PC-9 (cell line): ENCODE measurements at regions of chr1 and their contacts with region 1.

Region 1: DNA sequence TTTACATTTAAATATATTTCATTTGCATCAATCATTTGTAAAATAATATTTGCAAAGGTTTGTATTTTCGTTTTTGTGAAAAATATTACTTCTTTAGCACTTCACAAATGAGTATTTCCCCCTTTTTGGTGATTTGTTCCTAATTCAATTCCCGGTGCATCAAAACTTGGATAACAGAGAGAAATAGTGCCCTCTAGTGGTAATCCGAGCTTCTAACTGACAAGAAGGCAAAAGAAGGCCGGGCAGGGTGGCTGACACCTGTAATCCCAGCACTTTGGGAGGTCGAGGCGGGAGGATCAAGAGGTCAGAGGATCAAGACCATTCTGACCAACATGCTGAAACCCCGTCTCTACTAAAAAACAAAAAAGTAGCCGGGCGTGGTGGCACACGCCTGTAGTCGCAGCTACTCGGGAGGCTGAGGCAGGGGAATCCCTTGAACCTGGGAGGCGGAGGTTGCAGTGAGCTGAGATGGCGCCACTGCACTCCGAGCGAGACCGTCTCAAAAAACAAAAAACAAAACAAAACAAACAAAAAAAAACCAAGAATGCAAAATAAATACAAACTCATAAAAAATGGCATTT is 137.7 kb downstream of the COL11A1 start:
- DNase-seq: peak; percentile 11 to 62
- H3K4me3 ChIP-seq: no peak overlapping the region
- H3K27ac ChIP-seq: no peak overlapping the region
- H3K4me1 ChIP-seq: no peaks in the 10 kb centered on the region
- H3K27me3 ChIP-seq: no peaks in the 10 kb centered on the region
- CTCF ChIP-seq: peak; percentile 97

Region 2: DNA sequence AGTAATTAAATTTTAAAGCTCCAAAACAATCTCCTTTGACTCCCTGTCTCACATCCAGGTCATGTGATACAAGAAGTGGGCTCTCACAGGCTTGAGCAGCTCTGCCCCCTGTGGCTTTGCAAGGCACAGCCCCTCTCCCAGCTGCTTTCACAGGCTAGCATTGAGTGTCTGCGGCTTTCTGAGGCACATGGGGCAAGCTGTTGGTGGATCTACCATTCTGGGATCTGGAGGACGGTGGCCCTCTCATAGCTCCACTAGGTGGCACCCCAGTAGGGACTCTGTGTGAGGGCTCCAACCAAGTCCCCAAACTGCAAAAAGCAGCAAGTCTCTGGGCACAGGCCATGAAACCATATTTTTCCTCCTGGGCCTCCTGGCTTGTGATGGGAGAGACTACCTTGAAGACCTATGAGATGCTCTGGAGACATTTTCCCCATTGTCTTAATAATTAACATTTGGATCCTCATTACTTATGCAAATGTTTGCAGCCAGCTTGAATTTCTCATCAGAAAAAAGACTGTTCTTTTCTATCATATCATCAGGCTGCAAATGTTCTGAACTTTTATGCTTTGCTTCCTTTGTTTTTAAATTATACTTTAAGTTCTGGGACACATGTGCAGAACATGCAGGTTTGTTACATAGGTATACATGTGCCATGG is 419.7 kb before region 1 on chr1:
- CTCF ChIA-PET with region 1: no interaction called
- POLR2A ChIA-PET with region 1: no interaction called
- intact Hi-C with region 1: loop called (anchors 2 kb)
- DNase-seq: peak in 1 of 2 experiments; percentile 18
- H3K4me3 ChIP-seq: no peak overlapping the region
- H3K27ac ChIP-seq: no peak overlapping the region
- H3K4me1 ChIP-seq: no peaks in the 10 kb centered on the region
- H3K27me3 ChIP-seq: no peaks in the 10 kb centered on the region
- CTCF ChIP-seq: peak; percentile 71

Region 3: DNA sequence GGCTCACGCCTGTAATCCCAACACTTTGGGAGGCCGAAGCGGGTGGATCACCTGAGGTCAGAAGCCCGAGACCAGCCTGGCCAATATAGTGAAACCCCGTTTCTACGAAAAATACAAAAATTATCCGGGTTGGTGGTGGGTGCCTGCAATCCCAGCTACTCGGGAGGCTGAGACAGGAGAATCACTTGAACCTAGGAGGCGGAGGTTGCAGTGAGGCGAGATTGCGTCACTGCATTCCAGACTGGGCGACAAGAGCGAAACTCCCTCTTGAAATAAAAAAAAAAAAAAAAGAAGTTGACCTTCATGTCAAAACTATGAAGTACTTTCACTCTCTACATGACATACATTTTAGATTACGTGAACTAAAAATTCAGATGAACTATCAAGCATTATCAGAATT is 16.0 kb before region 1 on chr1:
- CTCF ChIA-PET with region 1: no interaction called
- POLR2A ChIA-PET with region 1: no interaction called
- intact Hi-C with region 1: no loop called
- DNase-seq: no peak
- H3K4me3 ChIP-seq: no peak overlapping the region
- H3K27ac ChIP-seq: no peak overlapping the region
- H3K4me1 ChIP-seq: no peaks in the 10 kb centered on the region
- H3K27me3 ChIP-seq: no peaks in the 10 kb centered on the region
- CTCF ChIP-seq: no peak